Activated T-helper 2 cell treated with anti-CD3 and anti-CD28 coated beads, Interferon-gamma antibody, Interleukin-2, Interleukin-4, amounts not matched to agents 10 μg/mL and 5 μg/mL and 100 μg/mL, durations not matched to agents 14 hours and 24 hours and 36 hours (primary cell): ENCODE measurements at regions of chr2 and their contacts with region 1.

Region 1: GRCh38 chr2:20962939-20963557 is 80.8 kb downstream of the APOB start:
- DNase-seq: peak; percentile 43
- H3K4me3 Mint-ChIP-seq: no peak overlapping the region
- H3K27ac Mint-ChIP-seq: no peak overlapping the region
- H3K4me1 Mint-ChIP-seq: no peaks in the 10 kb centered on the region
- H3K27me3 Mint-ChIP-seq: peaks cover 9% of the 10 kb centered on the region

Region 2: GRCh38 chr2:20446917-20447436 is 516.1 kb before region 1 on chr2 and contains the start of gene RHOB:
- intact Hi-C with region 1: no loop called
- DNase-seq: peak; percentile 86
- H3K4me3 Mint-ChIP-seq: peak within 1 kb of the TSS; percentile 81
- H3K27ac Mint-ChIP-seq: peak within 1 kb of the TSS; percentile 68
- H3K4me1 Mint-ChIP-seq: peaks cover 9% of the 10 kb centered on the region
- H3K27me3 Mint-ChIP-seq: peaks cover 40% of the 10 kb centered on the region
- total RNA-seq, gene RHOB: 119 and 123 TPM in 2 replicates

Region 3: GRCh38 chr2:20661067-20661980 is 301.7 kb before region 1 on chr2:
- intact Hi-C with region 1: loop called (anchors 1 kb)
- DNase-seq: peak; percentile 55
- H3K4me3 Mint-ChIP-seq: no peak overlapping the region
- H3K27ac Mint-ChIP-seq: no peak overlapping the region
- H3K4me1 Mint-ChIP-seq: no peaks in the 10 kb centered on the region
- H3K27me3 Mint-ChIP-seq: peaks cover 66% of the 10 kb centered on the region

Region 4: GRCh38 chr2:20682167-20682920 is 280.7 kb before region 1 on chr2:
- intact Hi-C with region 1: loop called (anchors 5 kb)
- DNase-seq: no peak
- H3K4me3 Mint-ChIP-seq: no peak overlapping the region
- H3K27ac Mint-ChIP-seq: no peak overlapping the region
- H3K4me1 Mint-ChIP-seq: peaks cover 4% of the 10 kb centered on the region
- H3K27me3 Mint-ChIP-seq: no peaks in the 10 kb centered on the region

Region 5: GRCh38 chr2:20781656-20782265 is 181.3 kb before region 1 on chr2:
- intact Hi-C with region 1: loop called (anchors 2 kb)
- DNase-seq: no peak
- H3K4me3 Mint-ChIP-seq: no peak overlapping the region
- H3K27ac Mint-ChIP-seq: no peak overlapping the region
- H3K4me1 Mint-ChIP-seq: peaks cover 13% of the 10 kb centered on the region
- H3K27me3 Mint-ChIP-seq: no peaks in the 10 kb centered on the region

Region 6: GRCh38 chr2:21256006-21256405 is 293.0 kb after region 1 on chr2:
- intact Hi-C with region 1: no loop called
- DNase-seq: no peak
- H3K4me3 Mint-ChIP-seq: no peak overlapping the region
- H3K27ac Mint-ChIP-seq: no peak overlapping the region
- H3K4me1 Mint-ChIP-seq: no peaks in the 10 kb centered on the region
- H3K27me3 Mint-ChIP-seq: no peaks in the 10 kb centered on the region